Activated T-helper 1 cell treated with anti-CD3 and anti-CD28 coated beads, Interleukin-12 subunit alpha, Interleukin-12 subunit beta, Interleukin-2, Interleukin-4 antibody, amounts not matched to agents 30 ng/mL and 10 ng/mL and 1 ng/mL, durations not matched to agents 14 hours and 24 hours and 36 hours (primary cell): ENCODE measurements at regions of chr12 and their contacts with region 1.

Region 1: DNA sequence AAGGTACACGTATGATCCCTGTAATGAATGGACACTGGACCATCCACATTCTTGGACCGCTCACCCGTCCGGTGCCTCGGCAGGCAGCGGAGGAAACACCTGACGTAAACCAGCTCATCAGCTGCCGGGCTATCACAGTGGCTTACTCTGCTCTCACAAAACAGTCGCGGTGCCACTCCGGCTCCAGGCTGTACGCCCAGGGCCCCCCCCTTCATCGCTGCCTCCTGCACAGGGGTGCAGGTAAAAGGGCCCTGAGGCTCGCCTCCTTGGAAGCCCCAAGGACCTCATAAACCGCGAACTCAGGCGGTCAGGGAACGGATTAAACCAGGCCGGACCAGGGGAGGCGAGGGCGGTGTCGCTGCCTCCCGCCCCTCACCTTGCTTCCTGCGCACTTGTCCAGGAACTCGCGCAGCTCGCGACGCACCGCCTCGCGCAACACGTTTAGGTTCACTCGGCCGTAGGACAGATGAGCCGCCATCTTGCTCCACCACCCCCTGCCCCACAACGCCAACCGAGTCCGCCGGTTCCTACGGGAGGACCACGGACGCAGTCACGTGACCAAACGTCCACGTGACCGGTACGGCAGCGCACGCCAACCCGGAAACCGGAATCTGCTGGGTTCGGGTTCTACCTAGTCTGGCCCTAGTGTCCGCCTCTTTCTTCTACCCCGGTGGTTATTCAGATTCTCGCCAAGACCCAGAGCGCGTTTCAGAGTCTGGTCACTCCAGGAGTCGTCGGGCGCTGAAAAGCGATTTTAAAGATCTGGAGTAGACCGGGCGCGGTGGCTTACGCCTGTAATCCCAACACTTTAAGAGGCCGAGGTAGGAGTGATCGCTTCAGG is at the start of gene VPS33A:
- DNase-seq: peak; percentile 95
- H3K4me3 Mint-ChIP-seq: peak within 1 kb of the TSS; percentile 94
- H3K27ac Mint-ChIP-seq: peak within 1 kb of the TSS; percentile 99
- H3K4me1 Mint-ChIP-seq: peaks cover 22% of the 10 kb centered on the region
- H3K27me3 Mint-ChIP-seq: no peaks in the 10 kb centered on the region
- total RNA-seq, gene VPS33A: 25.6 and 28.7 TPM in 2 replicates

Region 2: DNA sequence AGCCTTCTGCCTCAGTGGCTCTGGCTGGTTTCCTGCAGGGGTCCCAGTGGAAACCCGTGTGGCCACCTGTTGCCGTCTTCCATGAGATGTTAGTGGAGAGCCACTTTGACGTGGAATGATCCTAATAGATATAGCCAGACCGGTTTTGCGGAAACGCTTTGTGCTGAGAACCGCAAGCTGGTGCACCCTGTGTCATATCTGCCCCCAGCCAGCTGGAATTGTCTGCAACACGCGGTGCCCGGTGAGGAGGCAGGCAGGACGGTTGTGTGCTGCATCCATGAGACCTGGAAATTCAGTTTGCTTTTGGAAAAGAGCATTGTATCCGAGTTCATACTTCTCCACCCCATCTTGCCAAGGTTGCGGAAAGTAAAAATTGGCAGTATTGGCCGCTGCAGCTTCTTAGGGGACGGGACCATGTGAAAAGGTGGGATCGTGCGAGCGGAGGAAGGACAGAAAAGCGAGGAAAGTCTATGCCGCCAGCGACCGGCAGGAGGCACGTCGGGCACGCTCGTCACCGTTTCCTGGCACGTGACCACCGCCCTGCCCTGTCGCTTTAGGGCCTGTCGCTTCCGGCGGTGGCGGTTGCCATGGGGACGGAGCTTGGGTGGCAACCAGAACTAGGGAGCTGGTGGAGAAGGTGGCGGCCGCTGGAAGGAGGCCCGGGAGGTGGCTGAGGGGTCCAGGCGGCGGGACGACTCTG is 348.0 kb before region 1 on chr12 and contains the start of gene CFAP251:
- intact Hi-C with region 1: loop called (anchors 10 kb)
- DNase-seq: peak; percentile 92
- H3K4me3 Mint-ChIP-seq: peak within 1 kb of the TSS; percentile 80
- H3K27ac Mint-ChIP-seq: peak within 1 kb of the TSS; percentile 71
- H3K4me1 Mint-ChIP-seq: peaks cover 15% of the 10 kb centered on the region
- H3K27me3 Mint-ChIP-seq: peaks cover 2% of the 10 kb centered on the region
- total RNA-seq, gene CFAP251: 0.65 and 0.76 TPM in 2 replicates

Region 3: GRCh38 chr12:122244565-122245371 is 21.4 kb before region 1 on chr12:
- intact Hi-C with region 1: loop called (anchors 2 kb)
- DNase-seq: no peak
- H3K4me3 Mint-ChIP-seq: peak overlapping the region; percentile 82
- H3K27ac Mint-ChIP-seq: peak overlapping the region; percentile 94
- H3K4me1 Mint-ChIP-seq: peaks cover 22% of the 10 kb centered on the region
- H3K27me3 Mint-ChIP-seq: no peaks in the 10 kb centered on the region

Region 4: DNA sequence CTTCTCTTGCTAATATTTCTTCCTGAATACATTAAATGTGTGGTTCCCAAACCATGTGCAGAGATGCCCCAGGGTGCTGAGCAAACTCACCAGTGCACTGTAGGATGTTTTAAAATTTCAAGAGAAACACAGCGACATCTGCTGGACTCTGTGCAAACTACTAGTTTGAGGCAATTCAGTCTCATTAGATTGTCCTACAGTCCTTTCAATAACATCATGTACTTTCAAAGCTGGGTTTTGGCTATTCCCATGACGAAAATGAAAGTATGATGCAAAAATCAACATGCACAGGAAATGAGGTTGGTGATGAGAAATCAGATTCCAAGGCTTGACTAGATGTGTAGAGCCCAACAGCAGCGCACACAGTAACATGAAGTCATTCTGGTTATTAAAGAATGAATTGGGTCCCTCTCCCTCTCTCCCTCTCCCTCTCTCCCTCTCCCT is 90.1 kb after region 1 on chr12:
- intact Hi-C with region 1: loop called (anchors 5 kb)
- DNase-seq: peak; percentile 36
- H3K4me3 Mint-ChIP-seq: no peak overlapping the region
- H3K27ac Mint-ChIP-seq: no peak overlapping the region
- H3K4me1 Mint-ChIP-seq: peaks cover 6% of the 10 kb centered on the region
- H3K27me3 Mint-ChIP-seq: no peaks in the 10 kb centered on the region

Region 5: DNA sequence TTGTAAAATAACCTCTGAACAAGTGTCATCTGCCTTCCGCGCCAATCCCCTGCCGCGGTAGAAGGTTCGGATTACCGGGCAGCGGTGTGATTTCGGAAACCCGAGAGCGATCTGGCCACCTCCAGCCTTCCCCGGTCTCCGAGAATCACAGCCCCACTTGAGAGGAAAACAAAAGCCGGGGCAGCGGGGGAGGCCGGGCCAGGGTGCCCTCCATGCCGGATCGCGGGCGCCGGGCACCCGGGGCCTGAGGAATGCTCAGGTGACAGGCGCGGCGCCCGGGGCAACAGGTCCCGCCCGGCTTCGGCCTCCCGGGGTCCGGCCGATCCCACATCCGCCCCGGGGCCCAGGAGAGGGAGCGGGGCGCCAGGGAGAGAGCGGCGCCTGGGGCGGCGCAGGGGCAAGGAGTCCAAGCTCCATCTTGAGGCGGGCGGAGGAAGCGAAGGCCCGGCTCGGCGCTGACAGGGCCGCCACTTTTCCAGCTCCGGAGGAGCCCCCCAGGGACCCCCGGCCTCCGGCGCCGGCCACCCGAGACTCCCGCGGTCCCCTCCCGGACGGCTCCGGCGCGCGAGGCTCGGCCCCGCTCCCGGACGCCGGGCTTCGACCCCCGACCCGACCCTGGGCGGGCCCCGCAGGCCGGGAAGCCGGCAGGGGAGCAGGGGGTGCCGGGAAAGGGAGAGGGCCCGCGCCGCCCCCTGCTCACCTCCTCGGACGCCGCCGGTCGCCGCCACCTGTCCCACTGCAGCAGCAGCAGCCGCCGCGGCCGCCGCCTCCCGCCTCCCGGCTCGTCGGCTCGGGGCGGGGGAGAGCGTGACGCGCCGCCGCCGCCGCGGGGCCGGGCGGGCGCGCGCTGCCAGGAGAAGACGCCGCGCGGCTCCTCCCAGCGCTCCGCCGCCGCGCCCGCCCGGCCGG is 155.9 kb after region 1 on chr12 and contains the start of gene CLIP1:
- intact Hi-C with region 1: loop called (anchors 5 kb)
- DNase-seq: peak; percentile 57
- H3K4me3 Mint-ChIP-seq: peak within 1 kb of the TSS; percentile 94
- H3K27ac Mint-ChIP-seq: peak within 1 kb of the TSS; percentile 89
- H3K4me1 Mint-ChIP-seq: peaks cover 33% of the 10 kb centered on the region
- H3K27me3 Mint-ChIP-seq: peaks cover 2% of the 10 kb centered on the region
- total RNA-seq, gene CLIP1: 64.1 and 71.9 TPM in 2 replicates

Region 6: GRCh38 chr12:122459211-122459610 is 193.1 kb after region 1 on chr12:
- intact Hi-C with region 1: no loop called
- DNase-seq: no peak
- H3K4me3 Mint-ChIP-seq: no peak overlapping the region
- H3K27ac Mint-ChIP-seq: no peak overlapping the region
- H3K4me1 Mint-ChIP-seq: peaks cover 11% of the 10 kb centered on the region
- H3K27me3 Mint-ChIP-seq: no peaks in the 10 kb centered on the region

Region 7: DNA sequence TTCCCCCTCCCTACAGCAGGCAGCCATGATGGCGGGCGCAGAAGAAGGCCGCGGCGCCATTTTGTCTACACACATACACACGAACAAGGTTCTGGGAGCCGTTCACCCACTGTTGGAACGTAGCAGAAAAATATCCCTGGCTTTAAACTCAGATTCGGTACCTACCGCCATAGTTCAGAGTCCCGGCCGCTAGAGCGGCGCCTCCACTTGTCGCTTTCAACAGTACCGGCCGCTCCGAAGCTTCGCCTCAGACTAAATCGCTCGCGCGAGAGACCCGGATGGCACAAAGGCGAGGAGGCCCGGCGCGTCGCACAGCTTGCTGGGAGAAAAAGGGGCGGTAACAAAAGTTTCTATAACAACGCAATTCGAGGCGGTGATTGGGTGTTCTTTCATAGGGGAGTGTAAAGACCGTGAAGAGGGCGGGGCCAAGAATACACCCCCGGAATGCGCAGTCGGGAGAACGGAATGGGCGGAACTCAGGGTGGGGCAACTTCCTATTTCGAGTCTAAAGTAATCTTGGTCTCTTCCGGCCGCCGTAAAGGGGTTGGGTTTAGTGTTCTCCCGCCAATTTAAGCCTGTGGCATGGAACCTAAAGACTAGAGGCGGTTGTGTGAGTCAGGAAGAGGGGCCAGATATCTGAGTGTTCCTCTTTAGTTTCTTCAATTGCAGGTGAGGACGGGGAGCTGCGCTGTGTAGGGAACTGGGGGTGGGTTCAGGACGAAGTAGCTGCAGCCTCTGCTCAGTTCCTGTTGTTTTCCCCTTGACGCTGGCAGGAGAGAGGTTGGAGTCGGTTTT is 260.7 kb after region 1 on chr12 and contains the starts of genes KNTC1 and RSRC2:
- intact Hi-C with region 1: loop called (anchors 5 kb)
- DNase-seq: peak; percentile 99
- H3K4me3 Mint-ChIP-seq: no peak within 1 kb of the TSS
- H3K27ac Mint-ChIP-seq: no peak within 1 kb of the TSS
- H3K4me1 Mint-ChIP-seq: peaks cover 43% of the 10 kb centered on the region
- H3K27me3 Mint-ChIP-seq: no peaks in the 10 kb centered on the region
- total RNA-seq, gene KNTC1: 122 and 126 TPM in 2 replicates
- total RNA-seq, gene RSRC2: 101 and 103 TPM in 2 replicates

Region 8: DNA sequence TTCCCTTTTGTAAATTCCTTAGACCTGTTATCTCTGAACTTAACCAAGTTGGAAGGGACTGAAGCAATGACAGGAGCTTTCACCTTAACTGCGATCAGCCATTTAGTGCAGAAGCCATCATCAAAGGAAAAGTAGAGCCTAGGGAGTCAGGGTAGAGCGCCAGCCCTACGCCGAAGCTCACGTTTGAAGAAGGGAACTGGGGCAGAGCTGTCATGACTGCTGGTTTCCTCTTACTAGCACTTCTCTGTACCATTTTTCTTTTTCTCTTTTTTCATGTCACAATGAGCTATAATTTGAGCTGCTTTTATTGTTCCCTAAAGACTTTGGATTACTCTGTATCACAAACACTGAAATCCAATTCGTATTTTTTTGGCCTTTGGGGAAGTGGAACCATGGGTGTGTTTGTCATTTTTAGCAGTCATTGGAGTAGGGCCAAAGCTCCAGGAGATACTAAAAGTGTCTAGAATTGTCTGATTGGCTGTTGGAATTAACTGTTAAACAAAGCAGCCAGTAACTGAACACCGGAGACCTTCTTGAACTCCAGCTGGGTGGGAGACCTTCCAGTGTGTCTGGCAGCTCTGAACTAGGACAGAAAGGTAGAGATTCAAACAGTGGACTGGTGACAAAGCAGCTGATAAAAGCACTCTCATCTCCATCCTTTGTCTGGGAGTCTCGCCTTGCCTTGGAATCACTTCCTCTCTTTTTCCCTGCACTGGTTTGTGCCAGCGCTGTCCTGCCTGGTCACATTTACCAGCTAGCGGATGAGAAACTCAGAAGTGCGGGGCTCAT is 976.2 kb after region 1 on chr12:
- intact Hi-C with region 1: no loop called
- DNase-seq: no peak
- H3K4me3 Mint-ChIP-seq: no peak overlapping the region
- H3K27ac Mint-ChIP-seq: peak overlapping the region; percentile 79
- H3K4me1 Mint-ChIP-seq: peaks cover 43% of the 10 kb centered on the region
- H3K27me3 Mint-ChIP-seq: no peaks in the 10 kb centered on the region